ENCODE measurements at regions of chr11 and their contacts with region 1.

Region 1: DNA sequence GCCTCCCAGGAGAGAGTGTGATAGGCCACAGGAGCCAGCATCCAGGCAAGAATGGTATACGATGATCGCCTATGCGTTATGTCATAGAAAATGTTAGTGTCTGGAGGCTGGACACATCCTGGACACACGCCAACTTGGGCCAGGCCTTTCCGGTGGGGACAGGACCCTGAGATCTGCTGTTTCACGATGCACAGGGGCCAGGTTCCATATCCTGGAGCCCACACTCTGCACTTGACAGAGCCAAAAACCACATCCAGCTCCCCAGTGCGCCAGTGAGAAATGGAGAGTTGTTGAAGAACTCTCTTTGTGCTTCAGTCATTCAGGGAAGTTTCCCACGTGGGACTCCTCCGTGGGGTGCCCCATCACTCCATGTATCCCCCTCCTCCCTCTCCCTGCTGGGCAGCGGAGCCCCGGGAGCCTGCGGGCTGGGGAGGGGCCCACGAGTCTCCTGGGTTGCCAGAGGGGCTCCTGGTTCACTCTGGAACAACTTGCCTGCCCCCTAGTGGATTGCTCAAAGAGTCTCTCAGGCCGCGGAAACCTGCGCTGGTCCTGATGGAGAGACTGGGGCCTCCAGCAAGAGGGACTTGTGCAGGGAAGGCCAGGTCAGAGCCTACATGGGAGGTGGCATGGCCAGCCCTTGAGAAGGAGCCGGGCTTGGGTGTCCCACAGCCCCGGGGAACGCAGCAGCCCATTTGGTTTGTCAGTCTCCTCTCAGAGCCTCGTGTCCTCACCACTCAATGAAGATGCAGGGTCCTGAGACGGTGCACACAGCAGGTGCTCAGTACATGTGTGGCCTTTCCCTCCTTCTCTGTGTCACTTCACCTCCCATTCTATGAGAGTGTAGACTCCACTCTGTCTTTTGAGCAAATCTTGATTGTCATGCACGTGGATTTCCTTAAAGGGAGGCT is 10.2 kb upstream of the LRRC32 start:
- DNase-seq: peak; percentile 66
- ATAC-seq: peak; percentile 92
- H3K4me3 ChIP-seq: no peak overlapping the region
- H3K27ac ChIP-seq: no peak overlapping the region
- H3K4me1 ChIP-seq: peaks cover 4% of the 10 kb centered on the region
- H3K27me3 ChIP-seq: peaks cover 13% of the 10 kb centered on the region; the same call in 1 of the 2 replicates
- CTCF ChIP-seq: peak; percentile 85
- POLR2A ChIP-seq: 0 out of 2 replicates have a peak, but pooled peaks have one; percentile 33
- RAD21 ChIP-seq: peak; percentile 90

Region 2: DNA sequence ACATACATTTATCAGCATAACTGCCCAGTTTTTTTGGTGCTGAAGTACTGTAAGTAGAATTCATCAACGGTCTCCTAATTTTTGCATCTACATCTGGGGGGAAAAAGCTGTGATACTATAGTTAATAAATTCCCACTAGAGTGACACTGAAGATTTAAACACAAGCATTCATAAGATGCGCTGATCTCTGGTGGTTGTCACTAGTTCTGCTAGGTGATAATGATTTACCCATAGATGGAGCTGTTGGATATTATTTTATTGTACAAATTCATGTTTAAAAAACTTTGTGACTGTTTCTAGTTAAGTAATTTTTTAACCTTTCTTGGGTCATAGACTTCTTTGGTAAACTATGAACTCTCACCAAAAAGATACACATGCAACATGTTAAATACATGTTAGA is 129.4 kb before region 1 on chr11:
- CTCF ChIA-PET with region 1: no interaction called
- POLR2A ChIA-PET with region 1: no interaction called
- dilution Hi-C with region 1: no loop called
- in situ Hi-C with region 1: no loop called
- intact Hi-C with region 1: loop called (anchors 2 kb)
- DNase-seq: no peak
- ATAC-seq: no peak
- H3K4me3 ChIP-seq: no peak overlapping the region
- H3K27ac ChIP-seq: no peak overlapping the region
- H3K4me1 ChIP-seq: no peaks in the 10 kb centered on the region
- H3K27me3 ChIP-seq: no peaks in the 10 kb centered on the region
- CTCF ChIP-seq: peak; percentile 35
- POLR2A ChIP-seq: no peak
- RAD21 ChIP-seq: peak; percentile 26; the same call in 1 of the 2 replicates

Region 3: GRCh38 chr11:76598426-76598839 is 82.3 kb before region 1 on chr11:
- CTCF ChIA-PET with region 1: interaction called, 13 read pairs
- POLR2A ChIA-PET with region 1: no interaction called
- dilution Hi-C with region 1: no loop called
- in situ Hi-C with region 1: no loop called
- intact Hi-C with region 1: loop called (anchors 1 kb)
- DNase-seq: peak; percentile 56
- ATAC-seq: peak; percentile 84
- H3K4me3 ChIP-seq: no peak overlapping the region
- H3K27ac ChIP-seq: no peak overlapping the region
- H3K4me1 ChIP-seq: peaks cover 12% of the 10 kb centered on the region
- H3K27me3 ChIP-seq: 0 out of 2 replicates have a peak, but pooled peaks cover 1% of the 10 kb centered on the region
- CTCF ChIP-seq: peak; percentile 53
- POLR2A ChIP-seq: no peak
- RAD21 ChIP-seq: peak; percentile 69

Region 4: DNA sequence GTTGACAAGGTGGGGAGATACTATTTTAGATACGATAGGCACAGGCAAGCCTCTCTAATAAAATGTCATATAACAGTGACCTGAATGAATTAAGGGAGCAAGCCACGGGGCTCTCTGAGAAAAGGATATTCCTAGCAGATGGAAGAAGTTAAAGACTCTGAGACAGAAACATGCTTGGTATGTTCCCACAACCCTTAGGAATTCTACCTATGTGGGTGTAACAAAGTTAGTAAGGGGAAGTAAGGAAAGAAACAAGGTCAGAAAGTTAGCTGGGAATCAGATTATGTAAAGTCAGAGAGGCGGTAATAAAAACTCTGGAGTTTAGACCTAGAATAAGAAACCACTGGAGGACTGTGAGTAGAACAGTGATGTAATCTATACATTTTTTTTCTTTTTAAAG is 680.4 kb after region 1 on chr11:
- CTCF ChIA-PET with region 1: no interaction called
- POLR2A ChIA-PET with region 1: no interaction called
- dilution Hi-C with region 1: no loop called
- in situ Hi-C with region 1: no loop called
- intact Hi-C with region 1: no loop called
- DNase-seq: peak; percentile 63
- ATAC-seq: peak; percentile 49
- H3K4me3 ChIP-seq: no peak overlapping the region
- H3K27ac ChIP-seq: no peak overlapping the region
- H3K4me1 ChIP-seq: no peaks in the 10 kb centered on the region
- H3K27me3 ChIP-seq: no peaks in the 10 kb centered on the region
- CTCF ChIP-seq: no peak
- POLR2A ChIP-seq: no peak
- RAD21 ChIP-seq: no peak

Measured in IMR-90 (cell line).